ENCODE measurements at regions of chr18 and their contacts with region 1.

Region 1: GRCh38 chr18:21179590-21180220 is 62.3 kb upstream of the GREB1L start:
- DNase-seq: peak in 3 of 5 donors; percentile 44 to 52 (median 48)
- ATAC-seq: peak in 3 of 4 donors; percentile 65 to 74 (median 69)
- H3K4me3 ChIP-seq: no peak overlapping the region
- H3K27ac ChIP-seq: no peak overlapping the region
- H3K4me1 ChIP-seq: peaks cover 0 to 3% (median 0%) of the 10 kb centered on the region in 12 donors
- H3K27me3 ChIP-seq: no peaks in the 10 kb centered on the region
- CTCF ChIP-seq: peak; percentile 59 to 82 (median 70)
- POLR2A ChIP-seq: no peak

Region 2: GRCh38 chr18:20966795-20967194 is 212.9 kb before region 1 on chr18:
- intact Hi-C with region 1: loop called in 1 of 10 experiments (anchors 10 kb)
- DNase-seq: no peak
- ATAC-seq: no peak
- H3K4me3 ChIP-seq: no peak overlapping the region
- H3K27ac ChIP-seq: no peak overlapping the region
- H3K4me1 ChIP-seq: no peaks in the 10 kb centered on the region
- H3K27me3 ChIP-seq: no peaks in the 10 kb centered on the region
- CTCF ChIP-seq: no peak
- POLR2A ChIP-seq: no peak

Region 3: DNA sequence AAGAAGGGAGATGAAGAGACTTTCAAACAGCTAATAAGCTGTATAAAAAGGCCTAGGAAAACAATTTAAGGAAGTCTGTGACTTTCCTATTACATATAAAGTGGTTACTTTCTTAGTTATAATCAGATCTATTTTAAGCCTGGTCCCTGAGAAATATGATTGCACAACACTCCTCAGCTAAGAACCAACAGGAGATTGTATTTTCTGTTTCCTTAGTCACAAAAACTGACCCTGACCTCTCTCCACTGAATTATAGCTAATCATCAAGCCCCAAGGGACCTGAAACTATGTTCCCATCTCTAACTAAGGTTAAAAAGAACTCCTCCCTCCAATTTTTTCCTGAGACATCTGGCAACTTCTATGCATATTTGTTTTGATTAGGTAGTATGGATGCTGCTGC is 175.0 kb before region 1 on chr18:
- intact Hi-C with region 1: loop called in 1 of 10 experiments (anchors 10 kb)
- DNase-seq: peak in 2 of 5 donors; percentile 21 to 38
- ATAC-seq: peak; percentile 88 to 95 (median 92)
- H3K4me3 ChIP-seq: no peak overlapping the region
- H3K27ac ChIP-seq: peak overlapping the region; percentile 6 to 78 (median 56)
- H3K4me1 ChIP-seq: peaks cover 0 to 31% (median 18%) of the 10 kb centered on the region in 12 donors
- H3K27me3 ChIP-seq: no peaks in the 10 kb centered on the region
- CTCF ChIP-seq: no peak
- POLR2A ChIP-seq: no peak

Region 4: DNA sequence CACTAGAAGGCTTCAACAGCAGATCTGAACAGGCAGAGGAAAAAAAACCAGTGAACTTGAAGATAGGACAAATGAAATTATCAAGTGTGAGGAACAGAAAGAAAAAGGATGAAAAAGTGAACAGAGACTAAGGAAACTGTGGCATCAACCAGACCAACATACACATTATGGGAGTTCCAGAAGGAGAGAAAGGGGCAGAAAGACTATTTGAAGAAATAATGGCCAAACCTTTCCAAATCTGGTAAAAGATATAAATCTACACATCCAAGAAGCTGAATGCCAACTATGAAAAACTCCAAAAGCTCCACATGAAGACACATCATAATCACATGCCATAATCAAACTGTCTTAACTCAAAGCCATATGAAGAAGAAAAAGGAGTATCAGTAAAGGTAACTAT is 147.9 kb before region 1 on chr18:
- intact Hi-C with region 1: loop called in 1 of 10 experiments (anchors 5 kb)
- DNase-seq: no peak
- ATAC-seq: no peak
- H3K4me3 ChIP-seq: no peak overlapping the region
- H3K27ac ChIP-seq: no peak overlapping the region
- H3K4me1 ChIP-seq: no peaks in the 10 kb centered on the region
- H3K27me3 ChIP-seq: no peaks in the 10 kb centered on the region
- CTCF ChIP-seq: no peak
- POLR2A ChIP-seq: no peak

Region 5: GRCh38 chr18:21053127-21053526 is 126.6 kb before region 1 on chr18:
- intact Hi-C with region 1: loop called in 1 of 10 experiments (anchors 10 kb)
- DNase-seq: no peak
- ATAC-seq: peak; percentile 45 to 88 (median 56)
- H3K4me3 ChIP-seq: no peak overlapping the region
- H3K27ac ChIP-seq: no peak overlapping the region
- H3K4me1 ChIP-seq: peaks cover 0 to 59% (median 40%) of the 10 kb centered on the region in 12 donors
- H3K27me3 ChIP-seq: no peaks in the 10 kb centered on the region
- CTCF ChIP-seq: no peak
- POLR2A ChIP-seq: no peak

Region 6: DNA sequence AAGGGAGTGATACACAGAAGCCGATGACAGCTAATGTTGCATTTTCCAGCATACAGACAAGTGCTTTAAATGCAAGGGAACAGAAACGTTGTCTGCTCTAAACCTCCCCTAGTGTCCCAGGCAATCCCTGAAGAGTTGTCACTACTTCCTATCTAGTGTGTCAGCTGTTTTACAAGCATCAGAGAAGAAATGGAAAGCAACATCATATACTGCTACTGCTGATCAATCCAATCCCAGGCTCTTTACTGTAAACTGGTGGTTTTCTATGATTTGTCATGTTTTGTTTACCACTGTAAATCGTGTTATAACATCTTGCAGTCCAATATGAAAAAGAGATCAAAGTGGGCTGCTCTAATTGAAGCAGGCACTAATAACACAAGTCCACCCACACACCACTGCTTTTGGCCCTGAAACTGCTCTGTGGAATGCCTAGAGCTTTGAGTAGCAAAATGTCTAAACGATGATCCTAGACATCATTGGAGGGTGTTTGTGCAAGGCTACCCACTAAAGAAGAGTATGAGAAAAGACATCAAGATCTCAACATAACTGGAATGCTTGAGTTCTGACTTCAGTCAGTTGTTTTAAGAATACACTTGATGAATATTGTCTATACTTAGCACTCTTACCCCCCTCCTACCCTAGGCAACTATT is 50.0 kb before region 1 on chr18:
- intact Hi-C with region 1: loop called in 1 of 10 experiments (anchors 10 kb)
- DNase-seq: no peak
- ATAC-seq: peak in 1 of 4 donors; percentile 55
- H3K4me3 ChIP-seq: no peak overlapping the region
- H3K27ac ChIP-seq: no peak overlapping the region
- H3K4me1 ChIP-seq: peaks cover 0 to 15% (median 0%) of the 10 kb centered on the region in 12 donors
- H3K27me3 ChIP-seq: no peaks in the 10 kb centered on the region
- CTCF ChIP-seq: no peak
- POLR2A ChIP-seq: no peak

Region 7: DNA sequence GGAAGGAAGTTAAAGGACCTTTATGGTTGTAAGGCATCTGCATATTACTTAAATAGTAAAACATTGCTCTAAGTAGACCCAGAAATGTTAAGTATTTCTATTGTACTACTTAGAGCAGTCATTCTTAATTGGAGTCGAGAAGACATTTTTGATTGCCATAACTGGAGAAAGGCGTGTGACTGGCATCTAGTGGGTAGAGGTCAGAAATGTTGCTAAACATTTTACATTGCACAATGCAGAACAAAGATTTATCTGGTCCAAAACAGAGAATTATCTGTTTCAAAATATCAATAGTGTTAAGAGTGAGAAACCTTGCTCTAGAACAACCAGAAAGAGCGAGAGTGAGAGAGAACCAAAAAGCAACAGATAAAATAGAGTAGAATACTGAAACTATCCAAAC is 44.8 kb before region 1 on chr18:
- intact Hi-C with region 1: loop called in 1 of 10 experiments (anchors 5 kb)
- DNase-seq: no peak
- ATAC-seq: peak in 2 of 4 donors; percentile 51 to 54
- H3K4me3 ChIP-seq: no peak overlapping the region
- H3K27ac ChIP-seq: no peak overlapping the region
- H3K4me1 ChIP-seq: peaks cover 0 to 8% (median 0%) of the 10 kb centered on the region in 12 donors
- H3K27me3 ChIP-seq: no peaks in the 10 kb centered on the region
- CTCF ChIP-seq: peak in 11 of 12 donors; percentile 17 to 58 (median 38)
- POLR2A ChIP-seq: no peak

Region 8: GRCh38 chr18:21369146-21369545 is 189.4 kb after region 1 on chr18:
- intact Hi-C with region 1: no loop called
- DNase-seq: no peak
- ATAC-seq: no peak
- H3K4me3 ChIP-seq: no peak overlapping the region
- H3K27ac ChIP-seq: no peak overlapping the region
- H3K4me1 ChIP-seq: no peaks in the 10 kb centered on the region
- H3K27me3 ChIP-seq: no peaks in the 10 kb centered on the region
- CTCF ChIP-seq: no peak
- POLR2A ChIP-seq: no peak